ENCODE measurements at regions of chr16 and their contacts with region 1.

Region 1: DNA sequence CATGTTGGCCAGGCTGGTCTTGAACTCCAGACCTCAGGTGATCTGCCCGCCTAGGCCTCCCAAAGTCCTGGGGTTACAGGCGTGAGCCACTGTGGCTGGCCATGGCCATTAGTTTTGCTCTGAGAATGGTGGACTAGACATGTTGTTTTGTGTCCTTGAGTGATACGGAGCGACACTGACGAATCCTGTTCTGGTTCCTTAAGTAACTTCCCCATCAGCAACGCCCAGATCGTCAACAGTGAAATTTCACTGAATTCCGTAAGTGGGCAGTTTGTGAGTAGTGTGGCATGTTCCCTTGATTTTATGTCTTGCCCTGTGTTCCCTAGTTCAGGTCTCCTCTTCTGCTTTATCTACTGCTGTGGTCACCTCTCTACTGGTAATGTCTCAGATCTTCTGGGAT is 67.4 kb downstream of the SNX29 start:
- DNase-seq: no peak
- ATAC-seq: no peak
- H3K4me3 Mint-ChIP-seq: no peak overlapping the region
- H3K27ac Mint-ChIP-seq: peak overlapping the region; percentile 42
- H3K4me1 Mint-ChIP-seq: peaks cover 39% of the 10 kb centered on the region
- H3K27me3 Mint-ChIP-seq: no peaks in the 10 kb centered on the region
- CTCF ChIP-seq: no peak

Region 2: GRCh38 chr16:12026741-12027490 is 17.0 kb before region 1 on chr16:
- CTCF ChIA-PET with region 1: no interaction called
- POLR2A ChIA-PET with region 1: interaction called, 4 read pairs
- intact Hi-C with region 1: loop called (anchors 2 kb)
- DNase-seq: no peak
- ATAC-seq: no peak
- H3K4me3 Mint-ChIP-seq: no peak overlapping the region
- H3K27ac Mint-ChIP-seq: peak overlapping the region; percentile 57
- H3K4me1 Mint-ChIP-seq: peaks cover 71% of the 10 kb centered on the region
- H3K27me3 Mint-ChIP-seq: no peaks in the 10 kb centered on the region
- CTCF ChIP-seq: no peak

Region 3: GRCh38 chr16:12057266-12057665 is 13.3 kb after region 1 on chr16:
- CTCF ChIA-PET with region 1: no interaction called
- POLR2A ChIA-PET with region 1: no interaction called
- intact Hi-C with region 1: loop called (anchors 2 kb)
- DNase-seq: no peak
- ATAC-seq: no peak
- H3K4me3 Mint-ChIP-seq: no peak overlapping the region
- H3K27ac Mint-ChIP-seq: no peak overlapping the region
- H3K4me1 Mint-ChIP-seq: peaks cover 38% of the 10 kb centered on the region
- H3K27me3 Mint-ChIP-seq: no peaks in the 10 kb centered on the region
- CTCF ChIP-seq: no peak